Posterior vena cava (tissue), 2 donors: ENCODE measurements at regions of chr10 and their contacts with region 1.

Region 1: GRCh38 chr10:83190614-83191013 is 948.7 kb upstream of the GHITM start:
- DNase-seq: no peak

Region 2: DNA sequence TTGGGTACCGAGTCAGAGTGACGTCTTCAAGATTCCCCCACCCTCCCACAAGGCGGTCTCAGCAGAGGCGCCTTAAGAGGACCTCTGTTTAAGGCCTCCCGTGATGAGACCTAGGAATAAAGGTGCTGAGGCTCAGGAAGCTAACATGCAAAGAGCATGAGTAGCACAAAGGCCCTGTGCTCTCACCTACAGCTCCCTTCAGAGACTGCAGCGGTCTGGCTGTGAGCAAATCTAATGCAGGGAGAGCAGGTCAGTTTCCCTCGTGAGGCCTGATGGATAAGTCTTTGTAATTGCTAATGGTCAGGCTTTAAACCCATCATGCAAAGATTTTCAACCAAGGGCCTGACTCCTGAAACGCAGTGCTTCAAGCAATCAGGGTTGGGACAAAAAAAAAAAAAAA is 39.4 kb after region 1 on chr10:
- intact Hi-C with region 1: loop called in 1 of 2 experiments (anchors 1 kb)
- DNase-seq: no peak

Region 3: GRCh38 chr10:83343676-83344075 is 153.1 kb after region 1 on chr10:
- intact Hi-C with region 1: no loop called
- DNase-seq: no peak

Region 4: DNA sequence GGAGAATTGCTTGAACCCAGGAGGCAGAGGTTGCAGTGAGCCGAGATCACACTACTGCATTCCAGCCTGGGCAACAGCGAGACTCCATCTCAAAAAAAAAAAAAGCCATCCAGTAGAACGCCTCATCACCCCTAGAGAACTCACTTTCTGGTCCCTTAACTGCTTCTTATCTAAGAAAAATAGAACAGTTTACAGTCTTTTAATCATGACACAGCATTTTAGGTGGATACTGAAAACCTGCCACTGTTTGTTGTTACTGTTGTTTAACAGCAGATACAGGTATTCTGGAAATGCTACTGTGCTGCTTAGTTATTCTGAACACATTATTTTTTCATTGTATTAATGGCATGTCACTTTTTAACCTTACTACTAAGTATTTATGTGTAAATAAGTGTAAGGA is 324.4 kb after region 1 on chr10:
- intact Hi-C with region 1: no loop called
- DNase-seq: no peak

Region 5: DNA sequence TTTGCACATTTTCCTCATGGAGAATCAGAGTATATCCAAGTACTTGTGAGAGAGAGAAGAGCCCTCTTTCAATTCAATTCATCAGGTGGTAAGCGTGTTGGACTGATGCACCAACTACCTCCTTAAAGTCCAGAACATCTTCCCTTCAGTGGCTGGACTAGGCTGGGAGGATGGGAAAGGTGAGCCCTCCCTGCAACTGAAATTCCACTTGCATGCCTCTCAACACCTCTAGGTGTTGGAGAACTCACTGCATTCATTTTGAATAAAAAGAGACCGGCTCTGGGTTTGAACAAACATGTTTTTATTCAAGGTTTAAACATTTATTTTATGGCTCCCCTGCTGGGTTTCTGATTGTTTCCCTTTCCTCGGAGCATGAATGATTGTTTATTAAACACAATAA is 1711.3 kb after region 1 on chr10:
- intact Hi-C with region 1: no loop called
- DNase-seq: no peak